Activated CD4-positive, alpha-beta memory T cell treated with anti-CD3 and anti-CD28 coated beads for 36 hours (primary cell): ENCODE measurements at regions of chr11 and their contacts with region 1.

Region 1: GRCh38 chr11:113305440-113306336 is 8.7 kb upstream of the TTC12 start:
- DNase-seq: peak; percentile 79
- H3K4me3 Mint-ChIP-seq: no peak overlapping the region
- H3K27ac Mint-ChIP-seq: no peak overlapping the region
- H3K4me1 Mint-ChIP-seq: peaks cover 2% of the 10 kb centered on the region
- H3K27me3 Mint-ChIP-seq: peaks cover 5% of the 10 kb centered on the region

Region 2: GRCh38 chr11:112514011-112514740 is 791.5 kb before region 1 on chr11:
- CTCF ChIA-PET with region 1: no interaction called
- POLR2A ChIA-PET with region 1: no interaction called
- intact Hi-C with region 1: no loop called
- DNase-seq: no peak
- H3K4me3 Mint-ChIP-seq: no peak overlapping the region
- H3K27ac Mint-ChIP-seq: no peak overlapping the region
- H3K4me1 Mint-ChIP-seq: peaks cover 25% of the 10 kb centered on the region
- H3K27me3 Mint-ChIP-seq: peaks cover 5% of the 10 kb centered on the region

Region 3: GRCh38 chr11:113532697-113533424 is 227.2 kb after region 1 on chr11:
- CTCF ChIA-PET with region 1: interaction called, 41 read pairs
- POLR2A ChIA-PET with region 1: no interaction called
- intact Hi-C with region 1: loop called (anchors 1 kb)
- DNase-seq: peak; percentile 69
- H3K4me3 Mint-ChIP-seq: no peak overlapping the region
- H3K27ac Mint-ChIP-seq: no peak overlapping the region
- H3K4me1 Mint-ChIP-seq: no peaks in the 10 kb centered on the region
- H3K27me3 Mint-ChIP-seq: peaks cover 18% of the 10 kb centered on the region

Region 4: DNA sequence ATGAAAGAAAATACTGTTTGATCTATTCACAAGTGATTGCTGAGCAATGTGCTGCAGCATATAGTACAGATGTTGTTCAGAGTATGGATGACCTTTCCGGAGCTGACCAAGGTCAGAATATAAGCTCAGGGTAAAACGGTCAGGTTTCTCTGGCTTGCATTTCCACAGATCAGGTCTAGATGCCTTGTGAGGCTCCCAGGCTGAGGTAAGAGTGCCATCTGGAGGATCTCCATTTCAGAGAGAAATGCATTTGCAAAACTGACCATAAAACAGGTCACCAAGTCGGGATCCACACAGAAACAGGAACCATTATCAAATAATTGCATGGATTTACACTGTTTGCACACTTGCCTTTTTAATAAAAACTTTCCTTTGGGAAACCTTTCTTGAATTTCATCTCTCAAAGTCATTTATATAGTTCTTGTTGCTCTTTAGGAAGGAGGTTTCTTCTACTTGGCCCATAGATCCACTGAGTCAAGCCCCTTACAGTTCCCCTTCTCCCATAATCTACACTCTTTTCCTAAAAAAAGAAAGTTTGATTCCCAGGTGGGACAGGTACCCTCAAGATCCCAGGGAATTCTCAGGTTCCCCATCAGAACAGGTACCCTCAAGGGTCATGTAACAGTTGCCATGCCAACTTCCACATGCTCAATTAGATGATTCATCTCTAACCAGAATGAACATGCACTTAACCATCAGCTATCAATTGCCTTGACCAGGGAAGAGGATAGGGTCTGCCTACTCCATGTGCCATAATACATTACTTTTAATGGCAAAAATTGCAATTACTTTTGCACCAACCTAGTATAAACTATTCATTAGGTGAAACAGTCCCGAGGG is 425.4 kb after region 1 on chr11:
- CTCF ChIA-PET with region 1: interaction called, 4 read pairs
- POLR2A ChIA-PET with region 1: no interaction called
- intact Hi-C with region 1: loop called (anchors 2 kb)
- DNase-seq: no peak
- H3K4me3 Mint-ChIP-seq: no peak overlapping the region
- H3K27ac Mint-ChIP-seq: no peak overlapping the region
- H3K4me1 Mint-ChIP-seq: peaks cover 1% of the 10 kb centered on the region
- H3K27me3 Mint-ChIP-seq: no peaks in the 10 kb centered on the region

Region 5: DNA sequence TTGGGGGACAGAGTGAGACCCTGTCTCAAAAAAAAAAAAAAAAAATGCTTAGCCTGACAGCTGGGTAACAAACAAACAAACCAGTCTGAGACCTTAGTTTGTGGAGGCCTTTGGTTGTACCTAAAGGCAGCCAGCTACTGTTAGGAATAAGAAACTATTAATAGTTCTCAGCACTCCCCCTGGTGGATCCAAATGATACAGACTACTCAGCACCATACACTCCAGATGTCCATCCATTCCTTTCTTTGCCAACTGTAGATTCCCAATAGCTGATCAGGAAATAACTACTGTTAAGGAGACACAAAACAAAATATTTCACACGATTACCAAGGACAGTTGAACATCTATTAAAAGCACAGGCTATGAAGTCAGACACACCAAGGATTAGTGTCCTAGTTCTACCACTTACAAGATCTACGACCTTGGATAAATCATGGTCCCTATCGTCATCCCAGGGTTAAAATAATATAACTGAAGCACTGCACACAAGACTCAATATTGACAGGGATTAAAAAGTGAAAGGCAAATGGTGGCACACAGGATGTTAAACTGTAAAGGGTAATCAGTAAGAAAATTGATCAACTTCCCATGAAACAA is 491.1 kb after region 1 on chr11:
- CTCF ChIA-PET with region 1: interaction called, 11 read pairs
- POLR2A ChIA-PET with region 1: no interaction called
- intact Hi-C with region 1: loop called (anchors 2 kb)
- DNase-seq: no peak
- H3K4me3 Mint-ChIP-seq: no peak overlapping the region
- H3K27ac Mint-ChIP-seq: no peak overlapping the region
- H3K4me1 Mint-ChIP-seq: no peaks in the 10 kb centered on the region
- H3K27me3 Mint-ChIP-seq: no peaks in the 10 kb centered on the region